Prostate gland (tissue), 2 donors: ENCODE measurements at regions of chr1 and their contacts with region 1.

Region 1: GRCh38 chr1:64268653-64269557 is 65.5 kb downstream of the UBE2U start:
- DNase-seq: peak; percentile 77
- H3K4me3 ChIP-seq: no peak overlapping the region
- H3K27ac ChIP-seq: no peak overlapping the region
- H3K4me1 ChIP-seq: no peaks in the 10 kb centered on the region
- H3K27me3 ChIP-seq: no peaks in the 10 kb centered on the region
- CTCF ChIP-seq: peak; percentile 58 to 84 (median 72)
- POLR2A ChIP-seq: no peak

Region 2: DNA sequence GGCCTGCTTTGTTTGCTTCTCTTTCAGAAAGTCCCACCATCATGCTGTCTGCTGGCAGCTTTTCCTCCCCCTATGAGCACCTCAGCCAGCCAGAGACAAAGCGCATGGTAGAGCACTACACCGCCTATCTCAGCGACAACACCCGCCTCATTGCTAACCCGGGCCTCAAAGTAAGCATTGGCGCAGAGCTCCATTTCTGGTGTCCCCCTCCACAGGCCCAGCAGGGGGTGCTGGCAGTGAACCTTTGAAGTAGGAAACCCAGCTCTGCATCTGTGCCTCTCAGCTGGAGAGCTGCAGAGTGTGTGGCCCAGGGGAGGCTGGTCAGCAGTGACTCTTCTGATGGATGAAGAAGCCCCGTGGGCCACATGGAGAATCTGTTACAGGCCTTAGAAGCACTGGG is 394.8 kb after region 1 on chr1:
- intact Hi-C with region 1: loop called (anchors 5 kb)
- DNase-seq: no peak
- H3K4me3 ChIP-seq: no peak overlapping the region
- H3K27ac ChIP-seq: no peak overlapping the region
- H3K4me1 ChIP-seq: no peaks in the 10 kb centered on the region
- H3K27me3 ChIP-seq: no peaks in the 10 kb centered on the region
- CTCF ChIP-seq: no peak
- POLR2A ChIP-seq: no peak